ENCODE measurements at regions of chr21 and their contacts with region 1.

Region 1: DNA sequence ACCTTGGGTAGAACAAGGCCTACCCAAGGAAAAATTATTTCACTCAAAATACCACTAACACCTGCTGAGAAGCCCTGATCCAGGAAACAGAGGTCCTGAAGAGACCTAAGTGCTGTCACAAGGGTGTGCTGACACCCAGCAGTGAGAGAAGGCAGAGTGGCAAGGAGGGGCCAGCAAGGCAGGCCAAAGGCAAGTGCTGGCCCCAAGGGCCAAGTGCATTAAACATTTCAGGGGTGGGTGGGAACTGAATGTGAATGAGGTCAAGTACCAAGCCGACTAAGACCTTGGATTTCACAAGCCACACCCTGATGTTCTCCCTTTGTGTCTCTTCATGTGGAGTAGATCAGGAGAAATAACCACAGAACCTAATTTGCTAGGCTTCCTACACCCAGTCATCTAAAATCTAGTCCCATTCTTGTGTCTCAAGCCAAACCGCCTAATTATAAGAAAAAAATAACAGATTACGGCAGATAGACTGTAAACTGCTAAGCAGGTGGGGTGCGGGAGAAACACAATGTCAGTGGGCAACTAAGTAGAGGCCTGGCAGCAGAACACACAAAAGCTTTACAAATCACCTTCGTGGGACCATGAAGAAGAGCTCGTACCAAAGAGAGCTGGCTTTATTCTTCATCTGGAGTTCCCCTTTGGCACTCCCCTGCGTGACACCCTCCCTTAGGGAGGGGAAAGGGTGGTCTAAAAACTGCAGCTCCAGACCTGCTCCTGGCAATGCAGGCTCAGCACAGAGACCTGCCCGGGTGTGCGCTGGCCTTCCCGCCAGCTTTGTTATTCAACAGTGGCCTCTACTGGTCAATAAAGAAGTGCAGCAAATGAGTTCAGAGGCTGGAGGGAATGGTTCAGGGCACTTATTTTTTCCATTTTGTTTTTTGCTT is 8.7 kb downstream of the UBE2G2 start:
- DNase-seq: no peak

Region 2: DNA sequence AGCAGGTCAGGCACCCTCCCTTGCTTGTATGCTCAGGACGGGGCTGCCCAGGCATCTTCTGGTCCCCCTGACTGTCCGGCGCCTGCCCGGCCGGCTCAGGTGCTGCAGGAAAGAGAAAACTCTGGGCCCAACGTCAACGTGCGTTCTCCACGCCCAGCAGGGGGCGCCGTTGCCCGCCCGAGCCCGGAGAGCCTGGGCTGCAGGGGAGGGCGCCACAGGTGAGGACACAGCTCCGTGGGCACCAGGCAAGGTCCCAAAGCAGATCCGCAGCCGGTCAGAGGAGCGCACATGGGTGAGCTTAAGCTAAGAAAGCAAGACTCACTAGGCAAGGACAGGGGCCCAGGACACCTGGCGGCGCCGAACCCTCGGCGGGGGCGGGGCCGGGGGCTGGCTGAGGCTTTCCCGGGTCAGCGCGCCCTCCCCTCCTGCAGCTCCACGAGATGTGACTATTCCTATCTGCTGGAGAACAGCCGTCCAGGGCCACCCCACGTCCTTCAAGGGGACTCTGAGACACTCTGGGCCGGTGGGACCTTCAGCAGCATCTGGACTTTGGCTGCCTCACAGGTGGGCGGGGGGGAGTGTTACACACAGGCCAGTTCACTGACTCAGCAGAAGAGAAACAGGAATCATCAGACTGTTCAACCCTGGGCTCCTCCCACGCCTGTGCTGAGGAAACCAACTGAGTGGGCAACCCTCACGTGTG is 282.3 kb before region 1 on chr21:
- intact Hi-C with region 1: loop called (anchors 5 kb)
- DNase-seq: peak; percentile 89

Measured in cardiac septum (tissue), 1 donor.